ENCODE measurements at regions of chrX and their contacts with region 1.

Region 1: GRCh38 chrX:119871599-119872395 is at the starts of genes NDUFA1 and RNF113A:
- DNase-seq: peak; percentile 85
- ATAC-seq: peak; percentile 90
- H3K4me3 Mint-ChIP-seq: peak within 1 kb of the TSS; percentile 98
- H3K27ac Mint-ChIP-seq: peak within 1 kb of the TSS; percentile 100
- H3K4me1 Mint-ChIP-seq: peaks cover 8% of the 10 kb centered on the region
- H3K27me3 Mint-ChIP-seq: no peaks in the 10 kb centered on the region
- total RNA-seq, gene NDUFA1: 93.1 to 98.1 TPM
- total RNA-seq, gene RNF113A: 36.7 to 37.5 TPM

Region 2: GRCh38 chrX:119852382-119853353 is 19.1 kb before region 1 on chrX and contains the start of gene UPF3B:
- POLR2A ChIA-PET with region 1: interaction called, 16 read pairs
- DNase-seq: peak; percentile 85
- ATAC-seq: peak; percentile 96
- H3K4me3 Mint-ChIP-seq: peak within 1 kb of the TSS; percentile 97
- H3K27ac Mint-ChIP-seq: peak within 1 kb of the TSS; percentile 92
- H3K4me1 Mint-ChIP-seq: peaks cover 5% of the 10 kb centered on the region
- H3K27me3 Mint-ChIP-seq: no peaks in the 10 kb centered on the region
- total RNA-seq, gene UPF3B: 11.1 to 11.3 TPM